ENCODE measurements at regions of chr16 and their contacts with region 1.

Region 1: DNA sequence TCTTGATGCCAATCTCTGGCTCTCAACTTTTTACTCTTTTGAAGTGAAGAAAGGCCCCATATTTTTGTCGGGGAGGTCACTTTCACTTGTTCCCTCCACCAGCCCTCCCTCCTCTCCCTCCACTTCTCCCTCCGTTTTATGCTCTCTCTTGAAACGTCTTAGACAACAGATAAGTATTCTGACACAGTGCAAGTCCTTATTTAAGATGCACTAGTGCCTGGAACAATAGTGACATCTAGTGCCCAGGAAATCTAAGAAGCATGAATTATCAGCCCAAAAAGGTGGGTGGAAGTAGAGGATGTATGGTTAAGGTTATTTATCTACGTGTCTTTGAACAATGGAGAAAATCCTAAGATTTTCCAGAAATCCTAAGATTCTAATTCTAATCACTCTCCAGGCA is 17.9 kb downstream of the PSME3IP1 start:
- DNase-seq: peak; percentile 63
- H3K4me3 Mint-ChIP-seq: no peak overlapping the region
- H3K27ac Mint-ChIP-seq: no peak overlapping the region
- H3K4me1 Mint-ChIP-seq: peaks cover 13% of the 10 kb centered on the region
- H3K27me3 Mint-ChIP-seq: no peaks in the 10 kb centered on the region
- CTCF ChIP-seq: peak; percentile 60

Region 2: DNA sequence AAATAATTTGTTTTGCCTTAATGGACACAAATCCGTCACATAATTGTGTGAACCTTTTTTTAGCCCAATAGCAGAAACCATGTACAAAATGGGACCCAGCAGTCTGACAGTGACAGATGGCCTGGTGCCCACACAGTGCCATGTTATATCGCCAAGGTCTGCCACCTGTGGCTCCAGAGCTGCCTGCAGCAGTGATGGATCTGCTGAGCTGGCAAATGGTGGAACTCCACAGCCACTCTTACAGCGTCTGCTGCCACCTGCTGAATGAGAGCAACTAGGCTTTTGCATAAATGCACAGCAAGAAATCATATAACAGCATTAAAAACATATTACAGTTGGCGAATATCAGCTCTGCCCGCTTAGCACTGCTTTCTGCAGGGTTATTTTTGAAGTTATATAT is 378.6 kb before region 1 on chr16:
- CTCF ChIA-PET with region 1: interaction called, 3 read pairs
- POLR2A ChIA-PET with region 1: no interaction called
- intact Hi-C with region 1: loop called (anchors 5 kb)
- DNase-seq: peak; percentile 68
- H3K4me3 Mint-ChIP-seq: no peak overlapping the region
- H3K27ac Mint-ChIP-seq: no peak overlapping the region
- H3K4me1 Mint-ChIP-seq: no peaks in the 10 kb centered on the region
- H3K27me3 Mint-ChIP-seq: no peaks in the 10 kb centered on the region
- CTCF ChIP-seq: peak; percentile 49

Region 3: GRCh38 chr16:56866943-56867830 is 300.8 kb before region 1 on chr16:
- CTCF ChIA-PET with region 1: interaction called, 6 read pairs
- POLR2A ChIA-PET with region 1: no interaction called
- intact Hi-C with region 1: loop called (anchors 1 kb)
- DNase-seq: peak; percentile 63
- H3K4me3 Mint-ChIP-seq: no peak overlapping the region
- H3K27ac Mint-ChIP-seq: no peak overlapping the region
- H3K4me1 Mint-ChIP-seq: peaks cover 5% of the 10 kb centered on the region
- H3K27me3 Mint-ChIP-seq: no peaks in the 10 kb centered on the region
- CTCF ChIP-seq: peak; percentile 66

Region 4: GRCh38 chr16:56931892-56932720 is 235.8 kb before region 1 on chr16 and contains the start of gene HERPUD1:
- CTCF ChIA-PET with region 1: no interaction called
- POLR2A ChIA-PET with region 1: interaction called, 4 read pairs
- intact Hi-C with region 1: loop called (anchors 10 kb)
- DNase-seq: peak; percentile 98
- H3K4me3 Mint-ChIP-seq: peak within 1 kb of the TSS; percentile 99
- H3K27ac Mint-ChIP-seq: peak within 1 kb of the TSS; percentile 100
- H3K4me1 Mint-ChIP-seq: peaks cover 8% of the 10 kb centered on the region
- H3K27me3 Mint-ChIP-seq: no peaks in the 10 kb centered on the region
- CTCF ChIP-seq: no peak
- total RNA-seq, gene HERPUD1: 201 and 242 TPM in 2 replicates

Region 5: GRCh38 chr16:57084257-57084770 is 83.6 kb before region 1 on chr16:
- CTCF ChIA-PET with region 1: interaction called, 13 read pairs
- POLR2A ChIA-PET with region 1: no interaction called
- intact Hi-C with region 1: loop called (anchors 1 kb)
- DNase-seq: peak; percentile 74
- H3K4me3 Mint-ChIP-seq: no peak overlapping the region
- H3K27ac Mint-ChIP-seq: no peak overlapping the region
- H3K4me1 Mint-ChIP-seq: peaks cover 4% of the 10 kb centered on the region
- H3K27me3 Mint-ChIP-seq: no peaks in the 10 kb centered on the region
- CTCF ChIP-seq: peak; percentile 92

Region 6: DNA sequence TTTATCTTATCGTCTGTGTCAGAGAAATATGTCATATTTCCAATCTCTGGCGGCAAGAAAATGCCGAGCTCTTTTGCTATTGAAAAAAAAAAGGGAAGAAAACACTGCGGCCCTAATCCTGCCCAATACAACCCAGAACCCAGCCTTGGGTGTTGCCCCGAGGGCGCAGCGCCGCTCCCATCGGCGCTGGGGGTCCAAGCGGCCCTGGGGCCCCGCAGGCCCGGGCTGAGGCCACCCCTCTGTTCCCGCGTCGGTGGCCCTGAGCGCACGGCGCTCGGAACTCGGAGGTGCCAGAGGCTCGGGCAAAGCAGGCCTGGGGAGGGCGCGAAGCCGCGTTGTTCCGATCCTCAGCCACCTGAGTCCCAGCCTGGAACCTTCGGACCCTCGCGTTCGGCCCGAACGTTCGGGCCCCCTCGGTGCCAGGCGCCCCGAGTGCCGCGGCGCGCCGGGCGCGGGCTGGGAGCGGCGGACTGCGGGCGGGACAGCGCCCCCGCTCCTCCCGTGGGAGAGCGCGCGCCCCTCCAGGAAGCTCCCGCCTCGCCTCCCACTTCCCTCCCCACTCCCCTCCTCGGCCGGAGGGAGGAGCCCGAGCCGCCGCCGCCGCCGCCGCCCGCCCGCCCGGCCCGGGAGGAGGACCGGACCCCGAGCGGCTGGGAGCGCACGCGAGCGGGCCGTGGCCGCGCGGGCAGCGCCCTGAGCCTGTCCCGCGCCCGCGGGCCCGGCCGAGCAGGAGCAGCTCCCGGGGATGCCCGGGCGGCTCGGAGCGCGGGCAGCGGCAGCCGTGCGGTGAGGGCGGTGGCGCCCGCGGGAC is 75.8 kb before region 1 on chr16 and contains the start of gene CPNE2:
- CTCF ChIA-PET with region 1: interaction called, 6 read pairs
- POLR2A ChIA-PET with region 1: no interaction called
- intact Hi-C with region 1: loop called (anchors 2 kb)
- DNase-seq: peak; percentile 44
- H3K4me3 Mint-ChIP-seq: peak within 1 kb of the TSS; percentile 69
- H3K27ac Mint-ChIP-seq: no peak within 1 kb of the TSS
- H3K4me1 Mint-ChIP-seq: no peaks in the 10 kb centered on the region
- H3K27me3 Mint-ChIP-seq: no peaks in the 10 kb centered on the region
- CTCF ChIP-seq: peak; percentile 9
- total RNA-seq, gene CPNE2: 6.7 and 9.6 TPM in 2 replicates

Region 7: GRCh38 chr16:57462209-57462977 is 294.4 kb after region 1 on chr16 and contains the start of gene POLR2C:
- CTCF ChIA-PET with region 1: no interaction called
- POLR2A ChIA-PET with region 1: no interaction called
- intact Hi-C with region 1: no loop called
- DNase-seq: peak; percentile 81
- H3K4me3 Mint-ChIP-seq: peak within 1 kb of the TSS; percentile 76
- H3K27ac Mint-ChIP-seq: peak within 1 kb of the TSS; percentile 93
- H3K4me1 Mint-ChIP-seq: peaks cover 7% of the 10 kb centered on the region
- H3K27me3 Mint-ChIP-seq: no peaks in the 10 kb centered on the region
- CTCF ChIP-seq: peak; percentile 98
- total RNA-seq, gene POLR2C: 43.3 and 44.8 TPM in 2 replicates